ENCODE measurements at regions of chr1 and their contacts with region 1.

Region 1: DNA sequence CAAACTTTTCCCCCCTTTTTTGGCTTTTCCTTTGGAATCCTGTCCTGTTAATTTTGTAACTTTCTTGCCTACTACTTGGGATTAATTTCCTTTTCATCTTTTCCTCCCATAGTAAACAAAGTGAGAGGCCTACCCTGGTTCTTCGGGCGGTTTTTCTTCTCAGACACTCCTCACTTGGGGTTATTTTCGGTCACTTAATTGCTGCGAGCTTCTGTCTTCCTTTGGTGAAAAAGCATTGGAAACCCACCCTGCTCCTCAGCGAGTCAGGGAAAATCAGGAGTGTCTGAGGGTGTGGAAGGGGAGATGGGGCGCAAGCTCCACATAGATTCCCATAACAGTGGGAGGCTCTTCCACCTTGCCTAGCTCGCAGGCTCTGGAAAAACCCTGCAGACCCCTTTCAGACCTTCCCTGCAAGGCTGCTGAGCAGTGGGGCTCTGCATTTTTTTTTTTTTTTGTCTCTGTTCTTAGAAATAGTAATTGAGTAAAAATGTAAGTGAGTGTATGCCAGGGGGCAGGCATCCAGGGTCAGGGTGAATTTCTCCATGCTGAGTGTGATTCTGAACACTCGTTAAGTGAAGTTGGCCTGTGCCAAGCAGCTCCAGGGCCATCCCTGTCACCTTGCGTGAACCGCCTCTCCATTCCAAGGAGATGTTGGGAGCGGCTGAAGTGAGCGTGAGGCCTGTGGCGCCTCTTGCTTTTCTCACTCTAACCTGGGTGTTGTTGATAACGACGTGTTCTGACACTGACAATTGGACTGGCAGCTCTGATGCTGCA is 20.3 kb downstream of the TGFB2 start:
- DNase-seq: no peak
- ATAC-seq: no peak
- H3K4me3 ChIP-seq: no peak overlapping the region
- H3K27ac ChIP-seq: peak overlapping the region; percentile 83 to 90
- H3K4me1 ChIP-seq: peaks cover 93% of the 10 kb centered on the region
- CTCF ChIP-seq: no peak
- EP300 ChIP-seq: no peak
- POLR2A ChIP-seq: no peak
- RAD21 ChIP-seq: no peak

Region 2: GRCh38 chr1:218377143-218377660 is 11.8 kb after region 1 on chr1:
- CTCF ChIA-PET with region 1: interaction called, 16 read pairs
- POLR2A ChIA-PET with region 1: interaction called, 13 read pairs
- DNase-seq: peak; percentile 76 to 93
- ATAC-seq: peak; percentile 56 to 66
- H3K4me3 ChIP-seq: peak overlapping the region; percentile 7; the same call in 1 of the 3 replicates
- H3K27ac ChIP-seq: peak overlapping the region; percentile 92 to 94
- H3K4me1 ChIP-seq: peaks cover 95% of the 10 kb centered on the region
- CTCF ChIP-seq: no peak
- EP300 ChIP-seq: peak; percentile 87 to 95; a peak in 4 of 5 replicates
- POLR2A ChIP-seq: no peak
- RAD21 ChIP-seq: peak; percentile 24 to 46; a peak in 4 of 5 replicates

Measured in A549 (cell line).